Activated naive CD4-positive, alpha-beta T cell treated with anti-CD3 and anti-CD28 coated beads for 36 hours (primary cell): ENCODE measurements at regions of chr11 and their contacts with region 1.

Region 1: DNA sequence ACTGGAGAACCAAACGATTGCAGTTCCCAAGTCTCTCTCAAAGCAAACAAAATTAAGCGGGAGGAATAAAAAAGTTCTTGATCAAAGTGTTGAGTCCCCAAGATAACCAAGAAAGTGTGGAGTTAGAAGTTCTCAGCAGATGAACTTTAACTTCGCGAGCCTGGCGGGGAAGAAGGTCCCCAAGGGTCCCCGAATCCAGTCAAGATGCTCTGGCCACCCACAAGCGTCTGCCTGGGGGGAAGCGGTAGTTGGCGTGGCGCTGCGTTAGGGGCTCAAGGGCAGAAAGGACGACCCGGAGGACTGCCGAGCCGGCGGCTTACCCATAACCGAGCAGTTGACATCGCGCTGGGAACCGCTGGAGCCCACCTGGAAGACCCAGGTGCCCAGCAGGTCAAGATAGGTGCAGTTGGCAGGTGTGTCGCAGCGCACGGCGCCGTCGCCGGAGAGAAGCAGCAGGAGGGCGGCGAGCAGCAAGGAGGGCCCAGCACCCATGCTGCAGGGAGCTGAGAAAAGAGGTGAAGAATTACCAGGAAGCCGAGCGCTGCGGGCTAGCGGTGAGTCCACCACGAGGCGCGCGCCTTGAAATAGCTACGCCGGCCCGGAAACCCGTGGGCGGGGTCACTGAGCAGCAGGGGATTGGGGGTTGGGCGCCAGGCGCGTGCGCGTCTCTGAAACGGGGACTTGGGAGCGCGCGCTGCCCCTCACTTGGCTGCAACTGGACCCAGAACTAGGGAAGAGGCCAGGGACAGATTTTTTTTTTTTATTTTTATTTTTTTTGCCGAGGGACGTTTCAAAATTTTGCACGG is at the start of gene CTSC:
- DNase-seq: peak; percentile 92
- H3K4me3 Mint-ChIP-seq: peak within 1 kb of the TSS; percentile 99
- H3K27ac Mint-ChIP-seq: peak within 1 kb of the TSS; percentile 73
- H3K4me1 Mint-ChIP-seq: peaks cover 48% of the 10 kb centered on the region
- H3K27me3 Mint-ChIP-seq: no peaks in the 10 kb centered on the region
- total RNA-seq, gene CTSC: 19.1 to 22.2 TPM

Region 2: GRCh38 chr11:88016392-88017170 is 320.8 kb before region 1 on chr11:
- CTCF ChIA-PET with region 1: no interaction called
- intact Hi-C with region 1: no loop called
- DNase-seq: peak; percentile 77
- H3K4me3 Mint-ChIP-seq: no peak overlapping the region
- H3K27ac Mint-ChIP-seq: no peak overlapping the region
- H3K4me1 Mint-ChIP-seq: no peaks in the 10 kb centered on the region
- H3K27me3 Mint-ChIP-seq: no peaks in the 10 kb centered on the region

Region 3: DNA sequence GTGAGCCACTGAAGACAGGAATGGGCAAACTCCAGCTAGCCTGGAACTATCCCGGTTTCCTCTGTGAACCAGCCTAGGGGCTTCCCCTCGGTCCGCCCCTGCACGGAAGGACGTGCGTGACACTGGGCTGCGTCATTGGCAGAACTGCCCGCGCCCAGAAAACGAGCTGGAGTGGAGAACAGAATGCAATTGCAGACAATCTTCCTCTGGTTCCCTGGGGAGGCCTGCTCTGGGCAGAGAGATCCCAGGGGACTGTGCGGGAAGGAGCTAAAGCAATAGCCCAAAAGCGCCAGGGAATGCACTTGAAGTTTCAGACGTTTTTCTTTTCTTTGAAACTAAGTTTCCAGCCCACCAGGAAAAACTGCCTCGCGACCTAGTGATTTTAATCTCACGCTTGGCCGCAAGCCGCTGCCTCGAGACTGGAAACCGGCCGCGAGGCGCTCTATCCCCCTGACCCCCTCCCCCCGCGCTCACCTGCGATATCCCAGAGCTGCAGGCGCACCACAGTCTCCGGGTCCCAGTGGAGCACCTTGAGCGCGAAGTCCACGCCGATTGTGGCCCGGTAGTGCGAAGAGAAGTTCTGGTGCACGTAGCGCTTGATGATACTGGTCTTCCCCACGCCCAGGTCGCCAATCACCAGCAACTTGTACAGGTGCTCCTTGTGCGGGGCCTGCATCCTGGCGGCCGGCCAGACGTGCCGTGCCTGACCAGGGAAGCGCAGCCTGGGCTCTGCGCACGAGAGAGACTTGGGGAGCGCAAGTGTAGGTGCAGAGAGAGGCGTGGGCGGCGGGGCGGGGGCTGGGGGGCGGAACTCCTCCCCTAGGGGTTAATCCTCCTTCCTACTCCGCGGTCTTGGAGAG is 162.4 kb before region 1 on chr11 and contains the start of gene RAB38:
- CTCF ChIA-PET with region 1: no interaction called
- intact Hi-C with region 1: loop called (anchors 2 kb)
- DNase-seq: peak; percentile 75
- H3K4me3 Mint-ChIP-seq: peak within 1 kb of the TSS; percentile 72
- H3K27ac Mint-ChIP-seq: no peak within 1 kb of the TSS
- H3K4me1 Mint-ChIP-seq: peaks cover 31% of the 10 kb centered on the region
- H3K27me3 Mint-ChIP-seq: peaks cover 21% of the 10 kb centered on the region
- total RNA-seq, gene RAB38: 0.69 to 0.72 TPM

Region 4: DNA sequence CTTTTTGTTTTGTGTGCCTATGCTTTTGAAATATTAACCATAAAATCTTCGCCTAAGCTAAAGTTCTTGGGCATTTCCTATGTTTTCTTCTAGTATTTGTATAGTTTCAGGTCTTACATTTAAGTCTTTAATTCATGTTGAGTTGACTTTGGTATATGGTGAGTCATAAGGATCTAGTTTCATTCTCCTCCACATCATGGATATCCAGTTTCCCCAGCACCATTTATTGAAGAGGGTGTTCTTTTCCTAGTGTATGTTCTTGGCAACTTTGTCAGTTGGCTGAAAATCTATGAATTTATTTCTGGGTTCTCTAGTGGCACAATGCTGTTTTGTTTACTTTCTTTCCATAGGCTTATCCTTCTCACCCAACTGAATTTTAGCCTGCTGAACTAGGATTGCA is 48.8 kb before region 1 on chr11:
- CTCF ChIA-PET with region 1: no interaction called
- intact Hi-C with region 1: no loop called
- DNase-seq: no peak
- H3K4me3 Mint-ChIP-seq: no peak overlapping the region
- H3K27ac Mint-ChIP-seq: no peak overlapping the region
- H3K4me1 Mint-ChIP-seq: peaks cover 3% of the 10 kb centered on the region
- H3K27me3 Mint-ChIP-seq: no peaks in the 10 kb centered on the region

Region 5: GRCh38 chr11:88301488-88302140 is 35.8 kb before region 1 on chr11:
- CTCF ChIA-PET with region 1: no interaction called
- intact Hi-C with region 1: loop called (anchors 2 kb)
- DNase-seq: no peak
- H3K4me3 Mint-ChIP-seq: no peak overlapping the region
- H3K27ac Mint-ChIP-seq: no peak overlapping the region
- H3K4me1 Mint-ChIP-seq: peaks cover 22% of the 10 kb centered on the region
- H3K27me3 Mint-ChIP-seq: no peaks in the 10 kb centered on the region

Region 6: DNA sequence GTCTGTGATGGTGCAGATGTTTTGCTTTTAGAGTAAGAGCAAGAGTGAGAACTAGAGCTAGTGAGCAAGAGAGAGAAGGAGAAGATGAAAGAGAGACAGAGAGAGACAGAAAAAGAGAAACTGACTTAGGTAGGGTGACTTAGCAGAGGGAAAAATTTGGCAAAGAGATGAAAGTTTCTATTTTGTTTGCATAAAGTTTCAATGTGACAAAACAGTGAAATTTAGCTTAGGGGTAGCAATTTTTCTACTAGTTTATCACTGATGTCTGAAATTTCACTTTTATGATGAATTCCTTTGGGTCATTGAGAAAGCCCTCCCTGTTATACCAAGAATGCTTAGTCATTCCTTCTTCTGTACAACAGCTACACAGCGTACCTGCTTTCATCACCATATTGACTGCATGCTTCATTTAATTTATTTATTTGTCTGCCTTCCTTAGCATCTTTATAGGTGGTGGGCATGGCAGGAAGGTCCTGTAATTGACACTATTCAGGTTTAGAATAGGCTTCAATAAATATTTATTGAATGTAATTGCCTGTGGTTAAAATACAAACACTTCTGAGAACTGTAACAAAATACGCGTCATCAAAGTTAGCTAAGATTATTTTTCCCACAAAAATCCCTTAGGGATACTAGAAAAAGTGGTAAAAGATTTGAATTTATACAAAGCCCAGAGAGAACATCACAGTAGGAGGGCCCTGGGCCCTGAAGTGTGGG is 20.1 kb after region 1 on chr11:
- CTCF ChIA-PET with region 1: interaction called, 4 read pairs
- intact Hi-C with region 1: loop called (anchors 1 kb)
- DNase-seq: no peak
- H3K4me3 Mint-ChIP-seq: no peak overlapping the region
- H3K27ac Mint-ChIP-seq: peak overlapping the region; percentile 66
- H3K4me1 Mint-ChIP-seq: peaks cover 41% of the 10 kb centered on the region
- H3K27me3 Mint-ChIP-seq: no peaks in the 10 kb centered on the region

Region 7: DNA sequence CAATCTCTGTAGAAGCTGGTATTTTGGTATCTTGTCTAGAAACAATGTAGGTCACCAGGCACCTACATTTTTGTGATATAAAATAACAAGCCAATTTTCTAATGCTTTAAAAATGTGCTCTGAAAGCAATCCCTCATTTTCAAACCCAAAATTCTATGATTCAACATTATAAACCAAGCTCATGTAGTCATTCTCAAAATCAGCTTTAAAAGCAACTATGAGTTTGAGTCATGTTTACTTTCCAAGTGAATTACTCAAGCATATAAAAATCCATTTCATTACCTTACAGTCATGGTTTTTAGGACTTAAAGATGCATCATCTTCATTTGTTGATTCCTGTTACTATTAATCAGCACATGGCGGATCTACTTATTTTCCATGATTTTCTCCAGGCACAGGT is 512.0 kb after region 1 on chr11:
- CTCF ChIA-PET with region 1: no interaction called
- intact Hi-C with region 1: loop called (anchors 10 kb)
- DNase-seq: no peak
- H3K4me3 Mint-ChIP-seq: no peak overlapping the region
- H3K27ac Mint-ChIP-seq: no peak overlapping the region
- H3K4me1 Mint-ChIP-seq: peaks cover 17% of the 10 kb centered on the region
- H3K27me3 Mint-ChIP-seq: no peaks in the 10 kb centered on the region